ENCODE measurements at regions of chrX and their contacts with region 1.

Region 1: GRCh38 chrX:45769761-45770582 is 569.3 kb upstream of the DIPK2B start:
- DNase-seq: peak; percentile 91
- ATAC-seq: peak; percentile 57
- H3K4me3 ChIP-seq: peak overlapping the region; percentile 68
- H3K27ac ChIP-seq: peak overlapping the region; percentile 81
- H3K4me1 ChIP-seq: peaks cover 5% of the 10 kb centered on the region; the same call in 1 of the 2 replicates
- H3K27me3 ChIP-seq: no peaks in the 10 kb centered on the region
- CTCF ChIP-seq: no peak
- POLR2A ChIP-seq: peak; percentile 83
- RAD21 ChIP-seq: no peak

Region 2: DNA sequence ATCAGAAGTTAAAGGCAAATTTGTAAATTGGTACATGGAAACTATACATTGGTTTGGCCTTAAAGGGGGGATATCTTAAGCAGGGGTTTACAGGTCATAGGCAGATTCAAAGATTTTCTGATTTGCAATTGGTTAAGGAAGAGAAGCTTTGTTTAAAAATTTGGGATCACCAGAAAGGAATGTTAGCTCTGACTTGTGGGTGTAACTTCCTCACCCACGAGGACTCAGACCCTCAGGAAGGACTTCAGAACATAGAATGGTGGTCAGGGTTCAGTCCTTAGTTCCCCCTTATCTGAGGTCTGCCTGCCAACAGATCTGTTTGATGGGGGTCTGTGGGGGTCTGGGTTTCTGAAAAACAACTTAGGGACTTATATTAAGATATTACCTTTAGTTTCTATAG is 141.9 kb before region 1 on chrX:
- CTCF ChIA-PET with region 1: no interaction called
- POLR2A ChIA-PET with region 1: interaction called, 17 read pairs
- dilution Hi-C with region 1: no loop called
- in situ Hi-C with region 1: no loop called
- intact Hi-C with region 1: no loop called
- DNase-seq: peak; percentile 48
- ATAC-seq: peak; percentile 48
- H3K4me3 ChIP-seq: no peak overlapping the region
- H3K27ac ChIP-seq: no peak overlapping the region; the same call in 1 of the 2 replicates
- H3K4me1 ChIP-seq: peaks cover 3% of the 10 kb centered on the region
- H3K27me3 ChIP-seq: no peaks in the 10 kb centered on the region
- CTCF ChIP-seq: no peak
- POLR2A ChIP-seq: no peak
- RAD21 ChIP-seq: no peak

Region 3: DNA sequence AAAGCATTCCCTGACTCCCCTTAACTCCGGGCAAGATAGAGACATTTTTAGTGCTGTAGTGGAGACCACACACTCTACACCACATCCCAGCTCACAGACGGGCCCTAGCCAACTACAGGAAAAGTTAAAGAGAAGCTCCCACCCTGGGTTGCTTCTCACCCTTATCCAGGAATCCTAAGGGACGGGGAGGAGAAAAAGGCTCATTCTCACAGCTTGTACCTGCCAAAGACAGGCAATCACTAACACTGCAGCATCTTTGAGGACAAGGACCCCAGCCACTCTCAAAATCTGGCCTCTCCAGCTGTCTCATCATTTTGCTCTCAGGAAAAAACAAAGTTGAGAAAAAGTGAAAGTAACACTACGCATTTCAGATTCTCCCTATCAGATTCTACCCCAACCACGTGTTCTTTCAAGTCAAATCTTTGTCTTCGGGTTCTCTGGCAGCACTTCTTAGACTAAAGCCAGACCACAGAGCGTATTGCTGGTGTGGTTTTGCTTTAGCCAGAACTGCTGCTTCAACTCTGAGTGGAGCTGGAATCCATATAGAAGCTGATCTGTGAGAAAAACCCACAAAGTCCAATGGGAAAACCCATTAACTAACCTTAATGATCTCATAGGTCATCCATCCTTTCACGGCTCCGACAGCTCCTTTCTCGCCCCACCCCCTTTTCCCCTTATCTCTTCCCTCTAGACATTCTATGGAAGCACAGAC is 36.6 kb after region 1 on chrX:
- CTCF ChIA-PET with region 1: no interaction called
- POLR2A ChIA-PET with region 1: interaction called, 8 read pairs
- dilution Hi-C with region 1: no loop called
- in situ Hi-C with region 1: no loop called
- intact Hi-C with region 1: loop called (anchors 1 kb)
- DNase-seq: peak; percentile 92
- ATAC-seq: peak; percentile 28
- H3K4me3 ChIP-seq: peak overlapping the region; percentile 30
- H3K27ac ChIP-seq: peak overlapping the region; percentile 86
- H3K4me1 ChIP-seq: peaks cover 20% of the 10 kb centered on the region
- H3K27me3 ChIP-seq: no peaks in the 10 kb centered on the region
- CTCF ChIP-seq: no peak
- POLR2A ChIP-seq: peak; percentile 64; the same call in 1 of the 2 replicates
- RAD21 ChIP-seq: no peak

Region 4: GRCh38 chrX:45824471-45824870 is 54.5 kb after region 1 on chrX:
- CTCF ChIA-PET with region 1: no interaction called
- POLR2A ChIA-PET with region 1: no interaction called
- dilution Hi-C with region 1: no loop called
- in situ Hi-C with region 1: no loop called
- intact Hi-C with region 1: loop called (anchors 1 kb)
- DNase-seq: peak; percentile 96
- ATAC-seq: peak; percentile 92
- H3K4me3 ChIP-seq: no peak overlapping the region
- H3K27ac ChIP-seq: no peak overlapping the region
- H3K4me1 ChIP-seq: no peaks in the 10 kb centered on the region
- H3K27me3 ChIP-seq: peaks cover 2% of the 10 kb centered on the region; the same call in 1 of the 2 replicates
- CTCF ChIP-seq: peak; percentile 81
- POLR2A ChIP-seq: no peak
- RAD21 ChIP-seq: peak; percentile 81

Region 5: DNA sequence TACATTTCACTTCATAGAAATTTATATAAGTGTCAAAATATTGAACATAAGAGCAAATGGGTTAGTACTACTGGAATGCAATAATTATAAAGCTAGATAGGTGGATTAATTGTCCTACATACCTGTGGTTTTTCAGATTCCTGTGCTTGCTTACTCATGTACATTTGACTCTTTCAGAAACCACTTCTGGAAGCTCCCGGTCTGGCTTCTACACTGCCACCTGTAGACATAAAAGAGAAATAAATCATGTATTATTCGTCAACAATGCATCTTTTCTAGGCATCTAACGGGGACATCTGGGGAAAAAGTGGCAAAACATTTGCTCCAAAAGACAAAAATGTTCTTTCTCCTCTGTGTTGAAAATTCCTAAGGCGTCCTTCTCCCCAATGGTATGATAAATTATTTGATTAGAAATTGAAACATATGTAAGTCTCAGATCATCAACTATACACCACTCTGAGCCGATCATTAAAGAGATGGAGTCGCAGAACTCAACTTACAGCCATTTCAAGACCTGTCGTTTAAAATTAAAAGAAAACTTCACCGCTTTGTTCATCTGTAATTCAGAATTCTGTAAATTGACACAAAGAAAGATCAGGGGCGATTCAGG is 79.4 kb after region 1 on chrX:
- CTCF ChIA-PET with region 1: no interaction called
- POLR2A ChIA-PET with region 1: no interaction called
- dilution Hi-C with region 1: no loop called
- in situ Hi-C with region 1: no loop called
- intact Hi-C with region 1: loop called (anchors 5 kb)
- DNase-seq: peak; percentile 86
- ATAC-seq: peak; percentile 33
- H3K4me3 ChIP-seq: peak overlapping the region; percentile 90
- H3K27ac ChIP-seq: peak overlapping the region; percentile 15; the same call in 1 of the 2 replicates
- H3K4me1 ChIP-seq: peaks cover 2% of the 10 kb centered on the region; the same call in 1 of the 2 replicates
- H3K27me3 ChIP-seq: no peaks in the 10 kb centered on the region
- CTCF ChIP-seq: peak; percentile 46
- POLR2A ChIP-seq: no peak
- RAD21 ChIP-seq: peak; percentile 28

Region 6: GRCh38 chrX:45860450-45860849 is 90.5 kb after region 1 on chrX:
- CTCF ChIA-PET with region 1: no interaction called
- POLR2A ChIA-PET with region 1: no interaction called
- dilution Hi-C with region 1: no loop called
- in situ Hi-C with region 1: no loop called
- intact Hi-C with region 1: no loop called
- DNase-seq: no peak
- ATAC-seq: no peak
- H3K4me3 ChIP-seq: no peak overlapping the region
- H3K27ac ChIP-seq: no peak overlapping the region
- H3K4me1 ChIP-seq: no peaks in the 10 kb centered on the region
- H3K27me3 ChIP-seq: peaks cover 32% of the 10 kb centered on the region
- CTCF ChIP-seq: no peak
- POLR2A ChIP-seq: no peak
- RAD21 ChIP-seq: no peak

Region 7: DNA sequence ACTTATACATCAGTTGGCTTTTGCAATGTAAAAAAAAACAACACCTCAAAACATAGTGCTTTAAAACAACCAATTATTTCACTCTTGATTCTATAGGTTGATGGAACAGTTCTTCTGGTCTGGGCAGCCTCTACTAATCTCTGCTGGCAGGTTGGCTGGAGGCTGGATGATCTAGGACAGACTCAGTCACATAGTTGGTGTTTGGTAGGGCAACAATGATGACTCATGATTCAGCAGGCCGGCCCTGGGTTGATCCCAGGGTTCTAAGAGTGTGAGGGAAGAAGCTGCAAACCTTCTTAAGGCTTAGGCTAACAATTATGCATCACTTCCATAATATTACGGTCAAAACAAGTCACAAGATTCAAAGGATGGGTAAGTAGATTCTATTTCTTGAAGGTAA is 217.0 kb after region 1 on chrX:
- CTCF ChIA-PET with region 1: no interaction called
- POLR2A ChIA-PET with region 1: no interaction called
- dilution Hi-C with region 1: no loop called
- in situ Hi-C with region 1: no loop called
- intact Hi-C with region 1: no loop called
- DNase-seq: no peak
- ATAC-seq: no peak
- H3K4me3 ChIP-seq: no peak overlapping the region
- H3K27ac ChIP-seq: no peak overlapping the region
- H3K4me1 ChIP-seq: no peaks in the 10 kb centered on the region
- H3K27me3 ChIP-seq: peaks cover 2% of the 10 kb centered on the region; the same call in 1 of the 2 replicates
- CTCF ChIP-seq: no peak
- POLR2A ChIP-seq: no peak
- RAD21 ChIP-seq: no peak

Region 8: DNA sequence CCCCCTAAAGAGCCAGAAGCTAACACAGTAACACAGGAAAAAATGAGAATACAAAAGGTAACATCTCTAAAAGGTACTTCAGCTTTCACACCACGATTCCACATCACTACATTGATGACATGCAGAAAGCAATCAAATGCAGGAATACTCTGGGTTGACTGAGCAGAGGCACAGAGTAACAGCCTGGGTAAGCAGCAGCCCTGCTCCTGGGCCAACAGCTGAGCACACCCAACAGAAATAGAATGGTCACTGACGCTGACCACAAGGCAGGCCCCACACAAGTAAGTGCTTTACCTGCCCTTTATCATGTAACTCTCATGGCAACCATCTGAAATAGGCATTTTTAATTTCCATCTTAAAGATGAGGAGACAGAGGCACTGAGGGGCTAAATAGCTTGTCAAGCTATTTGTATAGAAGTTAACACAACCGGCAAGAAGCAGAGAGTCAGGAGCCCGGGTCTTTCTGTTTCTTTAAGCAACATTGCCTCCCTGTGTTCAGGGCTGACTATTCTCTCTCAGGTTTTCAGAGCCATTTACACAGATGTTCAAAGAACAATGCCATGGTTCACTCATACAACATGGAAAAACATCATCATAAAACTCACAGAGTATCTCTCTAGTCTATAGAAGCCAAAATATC is 606.4 kb after region 1 on chrX:
- CTCF ChIA-PET with region 1: no interaction called
- POLR2A ChIA-PET with region 1: no interaction called
- dilution Hi-C with region 1: no loop called
- in situ Hi-C with region 1: no loop called
- intact Hi-C with region 1: loop called (anchors 10 kb)
- DNase-seq: peak; percentile 48
- ATAC-seq: peak; percentile 83
- H3K4me3 ChIP-seq: no peak overlapping the region
- H3K27ac ChIP-seq: no peak overlapping the region
- H3K4me1 ChIP-seq: 0 out of 2 replicates have a peak, but pooled peaks cover 2% of the 10 kb centered on the region
- H3K27me3 ChIP-seq: no peaks in the 10 kb centered on the region
- CTCF ChIP-seq: peak; percentile 45
- POLR2A ChIP-seq: no peak
- RAD21 ChIP-seq: peak; percentile 55

Region 9: GRCh38 chrX:46408553-46409407 is 638.8 kb after region 1 on chrX:
- CTCF ChIA-PET with region 1: no interaction called
- POLR2A ChIA-PET with region 1: interaction called, 4 read pairs
- dilution Hi-C with region 1: no loop called
- in situ Hi-C with region 1: no loop called
- intact Hi-C with region 1: loop called (anchors 5 kb)
- DNase-seq: peak; percentile 76
- ATAC-seq: peak; percentile 83
- H3K4me3 ChIP-seq: no peak overlapping the region
- H3K27ac ChIP-seq: no peak overlapping the region
- H3K4me1 ChIP-seq: no peaks in the 10 kb centered on the region
- H3K27me3 ChIP-seq: peaks cover 2% of the 10 kb centered on the region; the same call in 1 of the 2 replicates
- CTCF ChIP-seq: peak; percentile 94
- POLR2A ChIP-seq: no peak
- RAD21 ChIP-seq: peak; percentile 92

Measured in IMR-90 (cell line).